ENCODE measurements at regions of chr1 and their contacts with region 1.

Region 1: GRCh38 chr1:248268178-248268577 is 9.6 kb downstream of the OR2T33 start:
- DNase-seq: peak; percentile 52
- ATAC-seq: peak; percentile 83
- H3K4me3 ChIP-seq: no peak overlapping the region
- H3K27ac ChIP-seq: no peak overlapping the region
- H3K4me1 ChIP-seq: no peaks in the 10 kb centered on the region
- H3K27me3 ChIP-seq: no peaks in the 10 kb centered on the region
- CTCF ChIP-seq: peak; percentile 39; the same call in 1 of the 2 replicates

Region 2: GRCh38 chr1:248045209-248045608 is 223.0 kb before region 1 on chr1:
- CTCF ChIA-PET with region 1: no interaction called
- POLR2A ChIA-PET with region 1: no interaction called
- intact Hi-C with region 1: loop called (anchors 1 kb)
- DNase-seq: no peak
- ATAC-seq: no peak
- H3K4me3 ChIP-seq: no peak overlapping the region
- H3K27ac ChIP-seq: no peak overlapping the region
- H3K4me1 ChIP-seq: no peaks in the 10 kb centered on the region
- H3K27me3 ChIP-seq: no peaks in the 10 kb centered on the region
- CTCF ChIP-seq: no peak

Region 3: DNA sequence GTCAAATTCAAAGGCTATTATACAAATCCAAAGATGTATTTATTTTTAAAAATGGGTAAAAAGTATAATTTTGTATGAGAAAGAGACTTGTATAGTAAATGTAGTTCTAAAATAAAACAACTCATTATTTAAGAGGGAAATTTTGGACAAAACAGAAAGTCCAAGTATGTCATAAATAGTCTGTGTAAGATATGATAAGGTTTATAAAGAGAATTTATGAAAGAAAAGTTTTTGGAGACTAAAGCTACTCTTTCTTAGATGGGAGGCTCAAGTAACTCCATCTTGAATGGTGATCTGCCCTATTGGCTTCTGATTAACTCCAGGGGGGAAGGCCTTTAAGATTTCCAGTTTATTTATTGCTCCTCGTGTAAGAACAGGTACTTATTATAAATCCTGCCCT is 401.8 kb after region 1 on chr1:
- CTCF ChIA-PET with region 1: no interaction called
- POLR2A ChIA-PET with region 1: no interaction called
- intact Hi-C with region 1: no loop called
- DNase-seq: peak; percentile 46
- ATAC-seq: no peak
- H3K4me3 ChIP-seq: no peak overlapping the region
- H3K27ac ChIP-seq: no peak overlapping the region
- H3K4me1 ChIP-seq: no peaks in the 10 kb centered on the region
- H3K27me3 ChIP-seq: no peaks in the 10 kb centered on the region
- CTCF ChIP-seq: no peak

Measured in PC-3 (cell line).